MCF 10A (cell line): ENCODE measurements at regions of chr19 and their contacts with region 1.

Region 1: GRCh38 chr19:40425450-40426287 is at the start of gene SERTAD1:
- DNase-seq: peak; percentile 99
- H3K4me3 Mint-ChIP-seq: peak within 1 kb of the TSS; percentile 95
- H3K27ac Mint-ChIP-seq: peak within 1 kb of the TSS; percentile 97
- H3K4me1 Mint-ChIP-seq: no peaks in the 10 kb centered on the region
- H3K27me3 Mint-ChIP-seq: no peaks in the 10 kb centered on the region
- CTCF ChIP-seq: peak; percentile 86
- total RNA-seq, gene SERTAD1: 16.2 and 17.9 TPM in 2 replicates

Region 2: GRCh38 chr19:40348125-40348913 is 77.3 kb before region 1 on chr19 and contains the starts of genes C19orf47 and PLD3:
- CTCF ChIA-PET with region 1: no interaction called
- POLR2A ChIA-PET with region 1: interaction called, 14 read pairs
- intact Hi-C with region 1: no loop called
- DNase-seq: peak; percentile 99
- H3K4me3 Mint-ChIP-seq: peak within 1 kb of the TSS; percentile 99
- H3K27ac Mint-ChIP-seq: peak within 1 kb of the TSS; percentile 95
- H3K4me1 Mint-ChIP-seq: peaks cover 17% of the 10 kb centered on the region
- H3K27me3 Mint-ChIP-seq: no peaks in the 10 kb centered on the region
- CTCF ChIP-seq: no peak
- total RNA-seq, gene C19orf47: 14.9 and 16.1 TPM in 2 replicates
- total RNA-seq, gene PLD3: 98.9 and 130 TPM in 2 replicates

Region 3: GRCh38 chr19:40444192-40445028 is 18.7 kb after region 1 on chr19 and contains the start of gene SERTAD3:
- CTCF ChIA-PET with region 1: interaction called, 18 read pairs
- POLR2A ChIA-PET with region 1: interaction called, 125 read pairs
- intact Hi-C with region 1: loop called (anchors 1 kb)
- DNase-seq: peak; percentile 96
- H3K4me3 Mint-ChIP-seq: peak within 1 kb of the TSS; percentile 100
- H3K27ac Mint-ChIP-seq: peak within 1 kb of the TSS; percentile 92
- H3K4me1 Mint-ChIP-seq: peaks cover 22% of the 10 kb centered on the region
- H3K27me3 Mint-ChIP-seq: no peaks in the 10 kb centered on the region
- CTCF ChIP-seq: no peak
- total RNA-seq, gene SERTAD3: 23.3 and 29.4 TPM in 2 replicates

Region 4: DNA sequence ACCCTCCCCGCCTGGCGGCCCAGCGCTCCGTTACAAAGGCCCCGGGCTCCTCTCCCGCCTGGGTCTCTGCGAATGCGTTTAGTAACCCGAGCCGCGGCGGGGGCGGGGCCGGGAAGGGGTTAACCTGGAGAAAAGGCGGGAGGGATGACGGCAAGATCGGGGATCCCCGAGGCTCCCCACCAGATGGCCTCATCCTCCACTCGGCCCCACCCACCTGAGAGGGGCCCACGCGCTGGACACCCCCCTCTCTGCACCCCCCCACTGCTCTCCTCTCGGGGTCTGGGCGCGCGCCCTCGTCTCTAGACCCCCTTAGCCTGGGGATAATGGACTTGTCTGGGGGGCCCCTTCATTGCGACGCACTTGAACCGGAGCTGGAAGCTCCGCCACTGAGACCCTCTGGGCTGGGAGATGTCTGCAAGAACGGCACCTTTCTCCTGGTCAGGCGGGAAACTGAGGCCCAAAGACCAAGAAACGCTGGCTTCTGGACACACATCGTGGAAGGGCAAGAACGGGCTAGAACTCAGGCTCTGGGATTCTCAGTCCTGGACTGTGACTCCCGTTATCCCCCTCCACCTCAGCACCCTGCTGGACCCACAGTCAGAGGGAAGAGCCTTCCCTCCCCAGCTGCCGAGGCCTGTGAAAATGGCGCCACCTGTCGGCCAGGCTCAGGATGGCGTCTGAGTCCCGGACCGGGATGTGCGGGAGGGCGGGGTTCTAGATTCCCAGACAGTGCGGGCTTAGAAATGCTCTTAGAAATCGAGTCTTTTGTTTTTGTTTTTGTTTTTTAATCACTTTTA is 172.7 kb after region 1 on chr19:
- CTCF ChIA-PET with region 1: interaction called, 10 read pairs
- POLR2A ChIA-PET with region 1: interaction called, 39 read pairs
- intact Hi-C with region 1: no loop called
- DNase-seq: peak; percentile 94
- H3K4me3 Mint-ChIP-seq: peak overlapping the region; percentile 54
- H3K27ac Mint-ChIP-seq: no peak overlapping the region
- H3K4me1 Mint-ChIP-seq: peaks cover 44% of the 10 kb centered on the region
- H3K27me3 Mint-ChIP-seq: no peaks in the 10 kb centered on the region
- CTCF ChIP-seq: peak; percentile 96

Region 5: GRCh38 chr19:40650749-40651305 is 225.2 kb after region 1 on chr19:
- CTCF ChIA-PET with region 1: interaction called, 10 read pairs
- POLR2A ChIA-PET with region 1: interaction called, 3 read pairs
- intact Hi-C with region 1: no loop called
- DNase-seq: no peak
- H3K4me3 Mint-ChIP-seq: no peak overlapping the region
- H3K27ac Mint-ChIP-seq: no peak overlapping the region
- H3K4me1 Mint-ChIP-seq: peaks cover 25% of the 10 kb centered on the region
- H3K27me3 Mint-ChIP-seq: no peaks in the 10 kb centered on the region
- CTCF ChIP-seq: no peak